Common myeloid progenitor, CD34-positive (primary cell): ENCODE measurements at regions of chr6 and their contacts with region 1.

Region 1: DNA sequence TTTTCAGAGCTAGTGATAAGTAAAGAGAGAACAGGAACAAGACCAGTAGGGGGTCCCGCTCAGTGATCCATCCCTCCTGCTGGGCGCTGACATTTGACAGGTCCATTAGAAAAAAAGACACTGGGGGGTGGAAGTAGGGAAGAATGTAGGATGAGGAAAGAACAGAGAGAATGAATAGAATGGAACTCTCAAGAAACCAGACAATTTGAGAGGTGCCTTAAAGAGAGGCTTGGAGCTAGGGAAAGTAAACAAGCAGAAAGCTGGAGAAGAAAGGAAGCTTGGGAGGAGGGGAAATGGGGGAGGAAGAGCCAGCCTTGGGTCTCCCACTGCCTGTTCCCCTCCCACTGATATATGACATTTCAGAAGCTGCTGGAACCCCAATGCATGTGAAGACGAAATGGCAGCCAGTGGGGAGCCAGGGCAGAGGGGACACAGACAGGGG is 8.4 kb downstream of the GABBR1 start:
- DNase-seq: no peak
- H3K4me3 ChIP-seq: no peak overlapping the region
- H3K27ac ChIP-seq: no peak overlapping the region
- H3K4me1 ChIP-seq: peaks cover 5 to 23% (median 18%) of the 10 kb centered on the region in 4 experiments
- H3K27me3 ChIP-seq: peaks cover 0 to 13% (median 0%) of the 10 kb centered on the region in 5 experiments

Region 2: DNA sequence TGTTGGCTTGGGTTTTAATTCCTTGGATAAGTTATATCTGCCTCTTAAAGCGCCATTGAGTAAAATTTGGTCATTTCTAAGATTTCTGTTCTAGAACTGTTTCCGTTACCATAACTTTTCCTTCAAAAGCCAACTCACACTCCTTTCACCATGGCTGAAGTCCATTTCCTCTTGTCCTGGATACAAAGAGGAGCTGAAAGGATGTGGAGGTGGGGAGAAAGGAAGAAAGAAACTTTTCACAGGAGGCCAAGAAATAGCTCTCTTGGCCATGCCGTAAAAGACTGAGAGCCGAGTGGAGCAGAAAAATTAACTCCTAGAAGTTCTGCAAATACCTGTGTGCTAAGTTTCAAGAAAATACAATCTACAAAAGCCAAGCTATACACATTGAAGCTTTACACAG is 13.1 kb before region 1 on chr6:
- CTCF ChIA-PET with region 1: interaction called, 14 read pairs
- POLR2A ChIA-PET with region 1: no interaction called
- DNase-seq: no peak
- H3K4me3 ChIP-seq: no peak overlapping the region
- H3K27ac ChIP-seq: no peak overlapping the region
- H3K4me1 ChIP-seq: no peaks in the 10 kb centered on the region
- H3K27me3 ChIP-seq: peaks cover 0 to 3% (median 0%) of the 10 kb centered on the region in 5 experiments